Endothelial cell of umbilical vein (primary cell): ENCODE measurements at regions of chr3 and their contacts with region 1.

Region 1: GRCh38 chr3:128845778-128846485 is 33.5 kb upstream of the ACAD9 start:
- DNase-seq: peak; percentile 79
- H3K4me3 ChIP-seq: peak overlapping the region; percentile 37 to 54 (median 54)
- H3K27ac ChIP-seq: no peak overlapping the region
- H3K4me1 ChIP-seq: peaks cover 4% of the 10 kb centered on the region
- H3K27me3 ChIP-seq: no peaks in the 10 kb centered on the region
- CTCF ChIP-seq: peak; percentile 65 to 78
- POLR2A ChIP-seq: no peak

Region 2: GRCh38 chr3:128665362-128666038 is 180.4 kb before region 1 on chr3:
- CTCF ChIA-PET with region 1: interaction called, 14 read pairs
- POLR2A ChIA-PET with region 1: no interaction called
- dilution Hi-C with region 1: no loop called
- intact Hi-C with region 1: loop called (anchors 1 kb)
- DNase-seq: peak; percentile 50
- H3K4me3 ChIP-seq: no peak overlapping the region
- H3K27ac ChIP-seq: no peak overlapping the region
- H3K4me1 ChIP-seq: peaks cover 3% of the 10 kb centered on the region
- H3K27me3 ChIP-seq: peaks cover 5 to 9% of the 10 kb centered on the region in 2 experiments
- CTCF ChIP-seq: peak in 1 of 2 donors; percentile 7
- POLR2A ChIP-seq: no peak

Region 3: GRCh38 chr3:129316131-129317013 is 470.4 kb after region 1 on chr3:
- CTCF ChIA-PET with region 1: no interaction called
- POLR2A ChIA-PET with region 1: no interaction called
- dilution Hi-C with region 1: no loop called
- intact Hi-C with region 1: no loop called
- DNase-seq: peak; percentile 78
- H3K4me3 ChIP-seq: peak overlapping the region; percentile 51 to 90 (median 68)
- H3K27ac ChIP-seq: peak overlapping the region; percentile 76
- H3K4me1 ChIP-seq: peaks cover 4% of the 10 kb centered on the region
- H3K27me3 ChIP-seq: no peaks in the 10 kb centered on the region
- CTCF ChIP-seq: peak; percentile 52 to 63
- POLR2A ChIP-seq: peak; percentile 100